Right cardiac atrium (tissue), 5 donors: ENCODE measurements at regions of chrX and their contacts with region 1.

Region 1: DNA sequence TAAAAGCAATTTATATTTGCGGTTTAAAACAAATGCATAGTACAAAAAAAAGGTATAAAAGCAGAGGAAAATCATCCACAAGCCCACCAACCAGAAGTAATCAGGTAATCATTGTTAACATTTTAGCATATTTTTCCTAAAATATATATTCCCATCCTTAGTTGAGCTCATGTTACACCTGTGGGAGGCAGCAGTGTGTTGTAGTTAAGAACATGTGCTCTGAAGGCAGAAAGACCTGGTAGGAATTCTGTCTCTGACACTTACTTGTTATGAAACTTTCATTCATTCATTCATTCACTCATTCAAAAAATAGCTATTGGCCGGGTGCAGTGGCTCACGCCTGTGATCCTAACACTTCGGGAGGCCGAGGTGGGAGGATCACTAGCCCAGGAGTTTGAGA is 15.4 kb upstream of the CDKL5 start:
- DNase-seq: no peak
- ATAC-seq: peak in 1 of 2 donors; percentile 54
- H3K4me3 ChIP-seq: no peak overlapping the region
- H3K27ac ChIP-seq: no peak overlapping the region
- H3K4me1 ChIP-seq: peaks cover 2% of the 10 kb centered on the region
- H3K27me3 ChIP-seq: no peaks in the 10 kb centered on the region

Region 2: GRCh38 chrX:18252644-18253359 is 157.2 kb before region 1 on chrX:
- intact Hi-C with region 1: no loop called
- DNase-seq: no peak
- ATAC-seq: no peak
- H3K4me3 ChIP-seq: no peak overlapping the region
- H3K27ac ChIP-seq: no peak overlapping the region
- H3K4me1 ChIP-seq: no peaks in the 10 kb centered on the region
- H3K27me3 ChIP-seq: no peaks in the 10 kb centered on the region

Region 3: DNA sequence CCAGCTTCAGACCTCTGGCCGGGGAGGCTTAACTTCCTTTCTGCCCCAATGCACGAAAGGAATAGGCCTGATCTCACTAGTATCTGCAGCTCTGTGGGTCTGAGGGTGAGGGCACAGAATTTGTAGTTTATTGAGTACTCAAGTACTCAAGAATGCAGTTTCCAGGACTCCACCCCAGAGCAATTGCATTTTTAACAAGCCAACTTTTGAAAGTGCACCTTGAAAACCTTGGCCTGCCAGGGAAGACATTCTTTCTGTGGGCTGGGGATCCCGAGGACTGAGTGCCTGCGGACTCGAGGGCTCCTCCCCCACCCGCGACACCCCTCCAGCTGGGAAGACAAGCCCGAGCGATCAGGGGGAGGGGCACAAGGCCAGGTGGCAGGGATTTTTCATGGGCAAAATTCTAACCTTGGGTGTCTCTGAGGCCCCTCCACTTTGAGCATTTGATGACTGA is 239.5 kb after region 1 on chrX:
- intact Hi-C with region 1: no loop called
- DNase-seq: no peak
- ATAC-seq: no peak
- H3K4me3 ChIP-seq: no peak overlapping the region
- H3K27ac ChIP-seq: no peak overlapping the region
- H3K4me1 ChIP-seq: no peaks in the 10 kb centered on the region
- H3K27me3 ChIP-seq: no peaks in the 10 kb centered on the region

Region 4: DNA sequence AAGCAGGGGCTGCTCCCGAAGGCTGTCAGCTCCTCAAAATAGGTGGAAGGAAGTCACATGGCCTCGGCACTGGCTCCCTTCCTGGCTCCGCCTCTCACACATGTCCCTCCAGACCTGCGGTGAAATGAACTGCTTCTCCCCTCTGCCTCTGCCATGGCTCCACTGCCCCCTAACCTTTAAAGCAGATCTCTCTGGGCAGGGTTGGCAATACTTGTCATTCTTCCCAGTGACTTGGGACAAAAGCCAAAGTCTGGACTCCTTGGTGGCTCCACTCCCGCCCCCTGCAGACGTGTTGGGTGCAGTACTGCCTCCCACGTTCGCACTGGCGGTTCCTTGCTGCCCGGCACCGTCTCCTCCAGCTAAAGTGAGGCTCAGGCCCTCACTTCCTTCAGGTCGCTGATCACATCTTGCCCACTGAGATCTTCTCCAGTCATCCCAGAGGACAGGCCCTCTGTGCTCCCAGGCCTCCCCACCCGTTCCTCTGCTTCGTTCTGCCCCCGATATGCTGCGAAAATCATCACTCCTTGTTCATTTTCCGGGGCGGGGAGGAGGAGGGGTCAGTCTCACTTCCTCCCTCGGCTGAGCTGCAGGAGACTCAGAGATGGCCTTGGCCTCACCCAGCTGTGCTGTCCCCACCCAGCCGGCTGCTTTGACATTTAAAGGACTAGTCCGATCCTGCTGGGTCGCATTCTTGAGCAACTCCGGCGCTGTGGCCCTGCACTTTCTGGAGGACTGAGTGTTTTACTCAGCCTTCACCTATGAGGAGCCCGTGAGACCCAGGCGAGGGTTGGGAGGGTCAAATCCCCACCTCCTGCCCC is 476.5 kb after region 1 on chrX:
- intact Hi-C with region 1: loop called in 2 of 4 experiments (anchors 10 kb)
- DNase-seq: peak; percentile 85 to 90 (median 88)
- ATAC-seq: peak; percentile 84 to 89
- H3K4me3 ChIP-seq: peak overlapping the region; percentile 28
- H3K27ac ChIP-seq: peak overlapping the region; percentile 96
- H3K4me1 ChIP-seq: peaks cover 3% of the 10 kb centered on the region
- H3K27me3 ChIP-seq: no peaks in the 10 kb centered on the region

Region 5: GRCh38 chrX:18899796-18900447 is 489.9 kb after region 1 on chrX:
- intact Hi-C with region 1: loop called in 2 of 4 experiments (anchors 5 to 10 kb)
- DNase-seq: peak in 1 of 3 donors; percentile 68
- ATAC-seq: peak in 1 of 2 donors; percentile 49
- H3K4me3 ChIP-seq: no peak overlapping the region
- H3K27ac ChIP-seq: no peak overlapping the region
- H3K4me1 ChIP-seq: no peaks in the 10 kb centered on the region
- H3K27me3 ChIP-seq: no peaks in the 10 kb centered on the region